ENCODE measurements at regions of chr13 and their contacts with region 1.

Region 1: GRCh38 chr13:21297914-21298831 is 121.7 kb downstream of the MRPL57 start:
- DNase-seq: peak; percentile 64 to 95 (median 84)
- ATAC-seq: peak; percentile 96
- H3K4me3 ChIP-seq: peak overlapping the region; percentile 69 to 78
- H3K4me3 Mint-ChIP-seq: peak overlapping the region; percentile 89
- H3K27ac ChIP-seq: peak overlapping the region; percentile 47 to 74
- H3K27ac Mint-ChIP-seq: peak overlapping the region; percentile 74
- H3K4me1 ChIP-seq: peaks cover 14% of the 10 kb centered on the region
- H3K4me1 Mint-ChIP-seq: peaks cover 18% of the 10 kb centered on the region
- H3K27me3 ChIP-seq: no peaks in the 10 kb centered on the region
- H3K27me3 Mint-ChIP-seq: no peaks in the 10 kb centered on the region
- CTCF ChIP-seq: peak; percentile 94

Region 2: DNA sequence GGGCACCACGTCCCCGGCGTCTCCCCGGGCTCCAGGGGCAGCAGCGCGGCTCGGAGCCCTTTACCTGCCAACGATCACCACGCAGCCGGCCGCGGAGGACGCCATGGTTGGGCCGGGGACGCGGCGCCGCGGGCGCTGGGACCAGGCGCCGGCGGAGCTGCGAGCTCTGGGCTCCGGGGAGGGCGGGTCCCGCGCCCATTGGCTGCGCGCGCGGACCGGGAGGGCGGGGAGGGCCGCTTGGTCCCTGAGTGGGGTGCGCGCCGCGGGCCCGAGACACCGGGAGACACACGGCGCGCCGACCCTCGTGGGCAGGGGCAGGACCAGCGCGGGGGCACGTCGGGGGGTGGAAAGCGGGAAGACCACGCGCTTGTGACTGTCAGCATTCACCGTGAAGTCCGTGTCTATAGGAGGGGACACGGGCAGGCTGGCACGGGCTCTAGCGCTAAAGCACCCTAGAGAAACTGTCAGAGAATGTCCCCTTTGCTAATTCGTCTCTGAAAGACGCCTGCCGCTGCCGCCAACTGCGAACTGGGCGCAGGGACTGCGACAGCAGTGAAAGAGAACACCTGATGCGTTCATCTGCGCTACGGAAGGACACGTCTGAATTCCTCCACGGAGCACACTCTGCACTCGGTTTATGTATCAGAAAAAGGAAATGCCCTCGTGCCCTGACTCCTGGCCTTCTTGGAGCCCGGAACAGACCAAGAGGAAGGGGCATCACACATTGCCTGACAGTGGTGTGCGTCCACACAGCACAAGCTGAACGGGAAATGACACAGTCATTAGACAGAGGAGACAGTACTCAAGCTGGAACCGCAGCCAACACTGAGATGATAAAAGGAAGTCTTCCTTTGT is 772.3 kb before region 1 on chr13 and contains the start of gene CRYL1:
- CTCF ChIA-PET with region 1: no interaction called
- POLR2A ChIA-PET with region 1: no interaction called
- intact Hi-C with region 1: loop called in 1 of 2 experiments (anchors 5 kb)
- DNase-seq: peak; percentile 46 to 86 (median 74)
- ATAC-seq: peak; percentile 89
- H3K4me3 ChIP-seq: peak within 1 kb of the TSS; percentile 78 to 81
- H3K4me3 Mint-ChIP-seq: peak within 1 kb of the TSS; percentile 96
- H3K27ac ChIP-seq: peak within 1 kb of the TSS; percentile 75 to 87
- H3K27ac Mint-ChIP-seq: peak within 1 kb of the TSS; percentile 96
- H3K4me1 ChIP-seq: peaks cover 17% of the 10 kb centered on the region
- H3K4me1 Mint-ChIP-seq: peaks cover 22% of the 10 kb centered on the region
- H3K27me3 ChIP-seq: no peaks in the 10 kb centered on the region
- H3K27me3 Mint-ChIP-seq: peaks cover 7% of the 10 kb centered on the region
- CTCF ChIP-seq: no peak
- total RNA-seq, gene CRYL1: 8.0 to 8.5 TPM

Region 3: DNA sequence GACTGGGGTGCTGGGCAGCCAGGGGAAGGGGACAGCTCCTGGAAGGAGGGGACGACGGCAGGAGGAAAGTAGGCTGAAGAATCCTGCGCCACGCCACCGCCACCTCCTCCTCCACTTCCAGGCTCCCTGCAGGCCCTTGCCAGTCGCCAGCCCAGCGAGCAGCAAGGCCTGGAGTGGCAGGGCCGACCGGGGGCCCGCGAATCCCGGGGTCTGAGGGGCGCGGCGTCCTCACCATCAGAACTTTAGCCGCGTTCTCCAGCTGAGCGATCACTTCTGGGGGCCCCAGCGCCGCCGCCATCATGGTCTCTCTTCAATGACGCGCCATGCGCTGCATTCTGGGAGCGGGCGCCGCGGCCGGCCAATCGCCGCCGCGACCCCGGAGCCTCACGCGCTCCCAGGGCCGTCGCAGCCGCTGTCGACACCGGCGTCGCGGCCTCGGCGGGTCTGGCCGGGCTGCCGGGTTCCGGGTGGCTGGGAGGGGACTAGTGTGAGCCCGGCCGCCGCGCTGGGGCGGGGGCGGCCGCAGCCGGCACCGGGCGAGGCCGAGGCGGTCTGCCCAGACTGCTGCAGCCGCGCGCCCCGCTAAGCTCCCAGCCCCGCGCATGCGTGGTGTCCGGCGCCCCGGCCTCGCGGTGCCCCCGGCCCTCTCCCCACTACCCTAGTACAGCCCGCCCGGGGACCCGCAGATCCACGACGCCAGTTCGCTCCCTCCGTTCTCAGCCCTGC is 395.6 kb before region 1 on chr13 and contains the start of gene XPO4:
- CTCF ChIA-PET with region 1: no interaction called
- POLR2A ChIA-PET with region 1: no interaction called
- intact Hi-C with region 1: loop called in 1 of 2 experiments (anchors 1 kb)
- DNase-seq: peak; percentile 55 to 88 (median 75)
- ATAC-seq: peak; percentile 96
- H3K4me3 ChIP-seq: peak within 1 kb of the TSS; percentile 81 to 89
- H3K4me3 Mint-ChIP-seq: peak within 1 kb of the TSS; percentile 94
- H3K27ac ChIP-seq: peak within 1 kb of the TSS; percentile 80 to 83
- H3K27ac Mint-ChIP-seq: peak within 1 kb of the TSS; percentile 93
- H3K4me1 ChIP-seq: peaks cover 11% of the 10 kb centered on the region
- H3K4me1 Mint-ChIP-seq: peaks cover 31% of the 10 kb centered on the region
- H3K27me3 ChIP-seq: no peaks in the 10 kb centered on the region
- H3K27me3 Mint-ChIP-seq: no peaks in the 10 kb centered on the region
- CTCF ChIP-seq: no peak
- total RNA-seq, gene XPO4: 23.8 to 24.5 TPM

Region 4: DNA sequence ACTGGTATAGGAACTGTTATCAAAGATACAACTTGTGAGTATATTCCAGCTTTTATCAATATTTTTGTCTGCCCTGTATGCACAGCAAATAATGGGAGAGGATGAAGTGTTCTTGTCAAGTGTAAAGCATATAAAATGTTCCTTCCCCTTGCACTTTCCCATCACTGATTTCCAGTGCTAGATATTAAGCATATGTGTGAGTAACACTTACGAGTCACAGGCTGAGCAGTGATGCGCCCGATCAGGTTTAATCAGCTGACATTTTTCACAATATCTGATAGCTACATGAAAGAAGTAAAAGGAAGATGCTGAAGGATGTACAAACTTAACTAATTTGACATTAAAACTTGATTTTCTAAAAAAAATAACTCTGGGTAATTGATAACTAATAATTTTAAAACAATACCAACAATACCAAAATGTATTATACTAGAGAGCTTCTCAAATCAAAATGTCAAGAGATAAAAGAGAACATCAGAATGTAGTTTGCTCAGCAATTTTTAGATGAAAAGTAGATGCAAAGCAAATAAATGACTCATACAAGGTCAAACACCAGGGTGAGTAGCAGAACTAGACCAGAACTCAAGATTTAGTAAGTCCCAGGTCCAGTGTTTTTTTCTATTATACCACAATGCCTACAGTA is 104.5 kb after region 1 on chr13:
- CTCF ChIA-PET with region 1: interaction called, 4 read pairs
- POLR2A ChIA-PET with region 1: no interaction called
- intact Hi-C with region 1: loop called in 1 of 2 experiments (anchors 10 kb)
- DNase-seq: no peak
- ATAC-seq: no peak
- H3K4me3 ChIP-seq: no peak overlapping the region
- H3K4me3 Mint-ChIP-seq: no peak overlapping the region
- H3K27ac ChIP-seq: no peak overlapping the region
- H3K27ac Mint-ChIP-seq: no peak overlapping the region
- H3K4me1 ChIP-seq: peaks cover 19% of the 10 kb centered on the region
- H3K4me1 Mint-ChIP-seq: peaks cover 36% of the 10 kb centered on the region
- H3K27me3 ChIP-seq: no peaks in the 10 kb centered on the region
- H3K27me3 Mint-ChIP-seq: no peaks in the 10 kb centered on the region
- CTCF ChIP-seq: no peak

Region 5: GRCh38 chr13:21603531-21604448 is 305.6 kb after region 1 on chr13 and contains the start of gene MICU2:
- CTCF ChIA-PET with region 1: no interaction called
- POLR2A ChIA-PET with region 1: no interaction called
- intact Hi-C with region 1: loop called (anchors 1 to 2 kb)
- DNase-seq: peak; percentile 91 to 98 (median 96)
- ATAC-seq: peak; percentile 92
- H3K4me3 ChIP-seq: peak within 1 kb of the TSS; percentile 73 to 85
- H3K4me3 Mint-ChIP-seq: peak within 1 kb of the TSS; percentile 84
- H3K27ac ChIP-seq: peak within 1 kb of the TSS; percentile 84 to 97
- H3K27ac Mint-ChIP-seq: peak within 1 kb of the TSS; percentile 94
- H3K4me1 ChIP-seq: peaks cover 24% of the 10 kb centered on the region
- H3K4me1 Mint-ChIP-seq: peaks cover 47% of the 10 kb centered on the region
- H3K27me3 ChIP-seq: no peaks in the 10 kb centered on the region
- H3K27me3 Mint-ChIP-seq: peaks cover 9% of the 10 kb centered on the region
- CTCF ChIP-seq: no peak
- total RNA-seq, gene MICU2: 28.3 to 36.0 TPM